ENCODE measurements at regions of chr21 and their contacts with region 1.

Region 1: GRCh38 chr21:28771790-28772501 is 220.7 kb downstream of the LTN1 start:
- DNase-seq: no peak
- H3K4me3 Mint-ChIP-seq: peak overlapping the region; percentile 23
- H3K27ac Mint-ChIP-seq: peak overlapping the region; percentile 18
- H3K4me1 Mint-ChIP-seq: peaks cover 66% of the 10 kb centered on the region
- H3K27me3 Mint-ChIP-seq: no peaks in the 10 kb centered on the region

Region 2: GRCh38 chr21:28832013-28832714 is 60.2 kb after region 1 on chr21:
- CTCF ChIA-PET with region 1: no interaction called
- POLR2A ChIA-PET with region 1: interaction called, 3 read pairs
- intact Hi-C with region 1: loop called (anchors 2 kb)
- DNase-seq: no peak
- H3K4me3 Mint-ChIP-seq: no peak overlapping the region
- H3K27ac Mint-ChIP-seq: peak overlapping the region; percentile 63
- H3K4me1 Mint-ChIP-seq: peaks cover 57% of the 10 kb centered on the region
- H3K27me3 Mint-ChIP-seq: no peaks in the 10 kb centered on the region

Region 3: GRCh38 chr21:28943631-28944030 is 171.7 kb after region 1 on chr21:
- CTCF ChIA-PET with region 1: no interaction called
- POLR2A ChIA-PET with region 1: no interaction called
- intact Hi-C with region 1: loop called (anchors 5 kb)
- DNase-seq: no peak
- H3K4me3 Mint-ChIP-seq: no peak overlapping the region
- H3K27ac Mint-ChIP-seq: peak overlapping the region; percentile 28
- H3K4me1 Mint-ChIP-seq: peaks cover 7% of the 10 kb centered on the region
- H3K27me3 Mint-ChIP-seq: no peaks in the 10 kb centered on the region

Region 4: GRCh38 chr21:29024474-29025327 is 252.8 kb after region 1 on chr21 and contains the start of gene USP16:
- CTCF ChIA-PET with region 1: no interaction called
- POLR2A ChIA-PET with region 1: no interaction called
- intact Hi-C with region 1: loop called (anchors 10 kb)
- DNase-seq: peak; percentile 96
- H3K4me3 Mint-ChIP-seq: peak within 1 kb of the TSS; percentile 100
- H3K27ac Mint-ChIP-seq: peak within 1 kb of the TSS; percentile 100
- H3K4me1 Mint-ChIP-seq: peaks cover 50% of the 10 kb centered on the region
- H3K27me3 Mint-ChIP-seq: no peaks in the 10 kb centered on the region
- total RNA-seq, gene USP16: 39.3 to 42.1 TPM

Region 5: GRCh38 chr21:29195981-29196669 is 424.2 kb after region 1 on chr21:
- CTCF ChIA-PET with region 1: no interaction called
- POLR2A ChIA-PET with region 1: no interaction called
- intact Hi-C with region 1: loop called (anchors 2 kb)
- DNase-seq: peak; percentile 85
- H3K4me3 Mint-ChIP-seq: peak overlapping the region; percentile 70
- H3K27ac Mint-ChIP-seq: peak overlapping the region; percentile 80
- H3K4me1 Mint-ChIP-seq: peaks cover 34% of the 10 kb centered on the region
- H3K27me3 Mint-ChIP-seq: peaks cover 3% of the 10 kb centered on the region

Measured in activated CD4-positive, alpha-beta memory T cell treated with anti-CD3 and anti-CD28 coated beads for 36 hours (primary cell).